ENCODE measurements at regions of chr7 and their contacts with region 1.

Region 1: DNA sequence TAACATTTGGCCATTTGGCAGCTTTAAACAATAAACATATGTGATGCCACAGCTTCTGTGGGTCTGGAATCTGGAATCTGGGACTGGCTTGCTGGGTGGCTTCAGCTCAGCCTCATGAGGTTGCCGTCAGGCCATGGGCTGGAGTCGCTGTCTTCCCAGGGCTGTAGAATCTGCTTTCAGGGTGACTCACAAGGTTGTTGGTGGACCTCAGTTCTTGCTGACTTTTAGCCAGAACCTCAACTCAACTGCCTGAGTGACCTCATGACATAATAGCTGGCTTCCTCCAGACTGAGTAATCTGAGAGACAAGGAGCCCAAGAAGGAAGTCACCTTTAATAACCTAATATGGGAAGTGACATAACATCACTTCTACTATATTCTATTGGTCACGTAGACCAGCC is 44.6 kb upstream of the TSPAN13 start:
- DNase-seq: peak; percentile 81
- H3K4me3 ChIP-seq: no peak overlapping the region
- H3K27ac ChIP-seq: peak overlapping the region; percentile 92
- H3K4me1 ChIP-seq: peaks cover 58% of the 10 kb centered on the region
- H3K27me3 ChIP-seq: no peaks in the 10 kb centered on the region
- CTCF ChIP-seq: no peak

Region 2: DNA sequence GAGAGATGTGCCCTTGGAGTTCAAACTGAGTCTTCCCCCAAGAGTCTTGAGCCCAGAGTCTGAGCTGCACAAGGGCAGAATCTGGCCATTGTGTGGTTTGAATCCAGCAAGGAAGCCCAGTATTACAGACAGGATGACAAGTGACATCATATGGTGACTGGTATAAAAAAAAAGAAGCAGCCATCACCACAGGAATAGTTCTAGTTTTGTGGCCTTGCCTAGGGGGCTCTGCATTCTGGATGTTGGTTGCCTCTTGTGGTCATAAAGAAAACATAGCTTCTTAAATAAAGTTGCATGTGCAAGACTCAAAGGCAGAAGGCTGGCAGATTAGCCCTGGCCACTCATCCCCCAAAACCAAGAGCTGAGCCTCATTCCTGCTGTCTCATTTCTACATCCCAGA is 199.2 kb before region 1 on chr7:
- CTCF ChIA-PET with region 1: no interaction called
- POLR2A ChIA-PET with region 1: interaction called, 4 read pairs
- intact Hi-C with region 1: loop called (anchors 5 kb)
- DNase-seq: peak; percentile 29
- H3K4me3 ChIP-seq: no peak overlapping the region
- H3K27ac ChIP-seq: no peak overlapping the region
- H3K4me1 ChIP-seq: peaks cover 8% of the 10 kb centered on the region
- H3K27me3 ChIP-seq: peaks cover 11% of the 10 kb centered on the region
- CTCF ChIP-seq: peak; percentile 28; the same call in 1 of the 2 replicates

Region 3: DNA sequence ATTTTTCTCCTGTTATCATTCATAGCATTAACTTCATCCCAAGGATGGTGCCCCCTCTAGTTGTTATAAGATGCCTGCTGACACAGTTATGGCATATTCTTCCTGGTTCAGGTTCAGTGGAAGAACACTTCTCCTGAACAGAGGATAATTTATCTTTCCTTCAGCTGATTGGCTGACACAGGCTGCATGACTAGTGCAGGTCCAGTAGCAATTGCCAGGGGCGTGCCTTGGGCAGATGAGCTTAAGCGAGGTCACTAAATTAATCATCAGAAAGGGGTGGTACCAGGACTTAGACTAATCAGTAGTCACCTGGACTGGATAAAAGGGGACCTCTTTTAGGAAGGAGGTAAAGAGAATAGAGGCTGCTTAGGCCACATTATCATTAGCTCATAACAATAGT is 20.7 kb before region 1 on chr7:
- CTCF ChIA-PET with region 1: no interaction called
- POLR2A ChIA-PET with region 1: no interaction called
- intact Hi-C with region 1: loop called (anchors 1 kb)
- DNase-seq: no peak
- H3K4me3 ChIP-seq: no peak overlapping the region
- H3K27ac ChIP-seq: no peak overlapping the region
- H3K4me1 ChIP-seq: peaks cover 35% of the 10 kb centered on the region
- H3K27me3 ChIP-seq: no peaks in the 10 kb centered on the region
- CTCF ChIP-seq: no peak

Region 4: GRCh38 chr7:16795624-16796023 is 86.6 kb after region 1 on chr7:
- CTCF ChIA-PET with region 1: no interaction called
- POLR2A ChIA-PET with region 1: no interaction called
- intact Hi-C with region 1: loop called (anchors 5 kb)
- DNase-seq: peak; percentile 63
- H3K4me3 ChIP-seq: no peak overlapping the region
- H3K27ac ChIP-seq: no peak overlapping the region
- H3K4me1 ChIP-seq: peaks cover 15% of the 10 kb centered on the region
- H3K27me3 ChIP-seq: no peaks in the 10 kb centered on the region
- CTCF ChIP-seq: no peak

Region 5: GRCh38 chr7:17041324-17041723 is 332.3 kb after region 1 on chr7:
- CTCF ChIA-PET with region 1: no interaction called
- POLR2A ChIA-PET with region 1: interaction called, 6 read pairs
- intact Hi-C with region 1: loop called (anchors 1 kb)
- DNase-seq: peak; percentile 97
- H3K4me3 ChIP-seq: peak overlapping the region; percentile 9
- H3K27ac ChIP-seq: peak overlapping the region; percentile 96
- H3K4me1 ChIP-seq: peaks cover 81% of the 10 kb centered on the region
- H3K27me3 ChIP-seq: no peaks in the 10 kb centered on the region
- CTCF ChIP-seq: no peak